ENCODE measurements at regions of chr13 and their contacts with region 1.

Region 1: GRCh38 chr13:24355103-24355502 is 45.7 kb downstream of the C1QTNF9 start:
- DNase-seq: no peak
- ATAC-seq: no peak

Region 2: DNA sequence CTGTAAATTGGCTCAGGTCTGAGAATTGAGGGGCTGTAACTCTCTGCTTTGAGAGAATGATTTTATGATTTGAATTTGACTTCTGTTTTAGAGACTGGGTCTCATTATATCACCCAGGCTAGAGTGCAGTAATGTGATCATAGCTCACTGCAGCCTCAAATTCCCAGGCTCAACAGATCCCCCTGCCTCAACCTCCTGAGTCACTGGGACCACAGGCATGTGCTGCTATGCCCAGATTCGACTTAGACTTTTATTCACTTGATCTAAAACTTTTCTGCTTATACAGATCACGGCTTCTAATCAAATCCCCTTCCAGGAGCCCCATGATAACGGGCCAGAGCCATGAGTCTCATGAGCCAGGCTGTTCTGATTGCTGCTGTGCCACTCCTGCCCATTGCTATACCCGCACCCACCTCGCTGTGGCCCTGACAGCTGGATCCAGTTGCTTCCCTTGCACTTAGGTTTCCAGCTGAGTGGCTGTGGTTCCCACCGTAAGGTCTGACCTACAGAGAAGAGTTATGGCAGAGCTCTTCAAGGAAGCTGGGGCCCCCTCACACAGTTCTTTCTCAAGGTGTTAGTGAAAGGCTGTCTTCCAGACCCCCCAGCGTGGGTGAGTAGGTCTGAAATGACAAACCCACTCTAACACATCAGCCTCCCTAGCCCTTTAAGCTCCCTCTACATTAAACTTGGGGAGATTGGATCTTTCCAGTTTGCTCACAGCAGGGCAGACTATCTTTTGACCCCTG is 1425.5 kb before region 1 on chr13:
- intact Hi-C with region 1: loop called in 1 of 2 experiments (anchors 10 kb)
- DNase-seq: no peak
- ATAC-seq: no peak

Region 3: DNA sequence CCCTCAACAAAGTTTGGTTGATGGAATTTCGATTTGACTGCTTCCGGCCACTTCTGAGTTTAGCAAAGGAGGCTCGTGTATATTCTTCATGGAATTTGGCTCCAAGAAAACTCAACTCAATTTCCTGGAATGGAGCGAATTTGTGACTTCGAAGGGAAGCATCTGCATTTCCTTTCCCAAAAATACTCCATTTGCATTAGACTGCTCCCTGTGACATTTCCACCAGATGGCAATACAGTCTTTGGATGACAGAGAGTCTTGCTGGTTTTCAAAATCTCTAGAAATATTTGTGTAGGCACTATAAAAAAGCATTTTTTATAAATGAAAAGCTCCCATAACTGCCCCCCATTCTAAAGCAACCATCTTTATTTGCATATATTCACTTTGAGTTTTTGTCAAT is 41.7 kb before region 1 on chr13:
- intact Hi-C with region 1: no loop called
- DNase-seq: no peak
- ATAC-seq: no peak

Measured in left cardiac atrium (tissue), 4 donors.